ENCODE measurements at regions of chr17 and their contacts with region 1.

Region 1: DNA sequence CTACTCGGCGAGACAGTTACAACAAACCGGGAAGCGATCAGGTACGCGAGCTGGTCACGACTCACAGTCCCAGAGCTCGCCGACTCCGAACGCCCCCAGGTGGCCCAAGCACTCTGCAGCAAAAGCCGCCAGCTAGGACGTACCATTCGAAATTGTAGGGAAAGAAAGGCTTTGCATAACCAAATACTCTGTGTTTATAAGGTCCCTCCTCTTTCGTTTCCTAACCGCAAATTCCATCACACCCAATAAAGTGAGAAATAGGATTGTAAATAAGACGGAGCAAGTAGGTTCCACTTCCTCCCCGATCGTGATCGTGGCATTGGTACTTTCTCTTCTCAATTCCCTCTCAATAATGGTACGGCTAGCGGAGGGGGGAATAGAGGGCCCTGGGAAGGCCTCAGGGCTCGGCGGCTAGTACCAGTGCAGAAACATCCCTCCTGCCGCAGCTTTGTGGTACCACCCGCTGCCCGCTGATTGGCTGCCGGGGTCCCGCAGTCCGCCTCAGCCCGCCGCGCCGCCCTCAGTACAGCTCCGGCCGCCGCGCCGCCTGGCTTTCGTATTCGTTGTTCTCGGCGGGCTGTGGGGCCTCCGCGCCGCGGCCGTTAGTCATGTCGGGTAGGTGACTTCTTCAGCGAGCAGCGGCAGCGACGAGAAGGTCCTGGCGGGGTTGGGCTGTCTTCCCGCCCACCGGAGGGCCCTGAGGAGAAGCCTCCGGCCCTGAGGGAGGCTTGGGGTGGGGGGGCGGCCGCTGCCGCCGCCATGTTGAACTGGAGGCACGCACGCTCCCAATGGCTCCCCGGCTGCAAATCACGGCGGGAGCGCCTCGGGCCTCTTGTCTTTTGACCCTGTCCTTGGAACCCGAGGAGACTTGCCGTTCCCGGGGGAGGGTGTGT is at the start of gene TAF15:
- DNase-seq: peak; percentile 98
- ATAC-seq: peak; percentile 88
- H3K4me3 Mint-ChIP-seq: peak within 1 kb of the TSS; percentile 78
- H3K27ac Mint-ChIP-seq: peak within 1 kb of the TSS; percentile 97
- H3K4me1 Mint-ChIP-seq: peaks cover 57% of the 10 kb centered on the region
- H3K27me3 Mint-ChIP-seq: no peaks in the 10 kb centered on the region
- total RNA-seq, gene TAF15: 316 to 330 TPM

Region 2: GRCh38 chr17:34980681-34981537 is 828.3 kb before region 1 on chr17:
- CTCF ChIA-PET with region 1: no interaction called
- POLR2A ChIA-PET with region 1: interaction called, 3 read pairs
- intact Hi-C with region 1: loop called in 1 of 2 experiments (anchors 1 kb)
- DNase-seq: peak; percentile 82
- ATAC-seq: peak; percentile 82
- H3K4me3 Mint-ChIP-seq: peak overlapping the region; percentile 86
- H3K27ac Mint-ChIP-seq: peak overlapping the region; percentile 93
- H3K4me1 Mint-ChIP-seq: peaks cover 50% of the 10 kb centered on the region
- H3K27me3 Mint-ChIP-seq: no peaks in the 10 kb centered on the region

Region 3: GRCh38 chr17:35312790-35313711 is 496.2 kb before region 1 on chr17:
- CTCF ChIA-PET with region 1: interaction called, 5 read pairs
- POLR2A ChIA-PET with region 1: no interaction called
- intact Hi-C with region 1: loop called in 1 of 2 experiments (anchors 5 kb)
- DNase-seq: peak; percentile 77
- ATAC-seq: peak; percentile 86
- H3K4me3 Mint-ChIP-seq: peak overlapping the region; percentile 73
- H3K27ac Mint-ChIP-seq: peak overlapping the region; percentile 86
- H3K4me1 Mint-ChIP-seq: peaks cover 28% of the 10 kb centered on the region
- H3K27me3 Mint-ChIP-seq: no peaks in the 10 kb centered on the region

Region 4: DNA sequence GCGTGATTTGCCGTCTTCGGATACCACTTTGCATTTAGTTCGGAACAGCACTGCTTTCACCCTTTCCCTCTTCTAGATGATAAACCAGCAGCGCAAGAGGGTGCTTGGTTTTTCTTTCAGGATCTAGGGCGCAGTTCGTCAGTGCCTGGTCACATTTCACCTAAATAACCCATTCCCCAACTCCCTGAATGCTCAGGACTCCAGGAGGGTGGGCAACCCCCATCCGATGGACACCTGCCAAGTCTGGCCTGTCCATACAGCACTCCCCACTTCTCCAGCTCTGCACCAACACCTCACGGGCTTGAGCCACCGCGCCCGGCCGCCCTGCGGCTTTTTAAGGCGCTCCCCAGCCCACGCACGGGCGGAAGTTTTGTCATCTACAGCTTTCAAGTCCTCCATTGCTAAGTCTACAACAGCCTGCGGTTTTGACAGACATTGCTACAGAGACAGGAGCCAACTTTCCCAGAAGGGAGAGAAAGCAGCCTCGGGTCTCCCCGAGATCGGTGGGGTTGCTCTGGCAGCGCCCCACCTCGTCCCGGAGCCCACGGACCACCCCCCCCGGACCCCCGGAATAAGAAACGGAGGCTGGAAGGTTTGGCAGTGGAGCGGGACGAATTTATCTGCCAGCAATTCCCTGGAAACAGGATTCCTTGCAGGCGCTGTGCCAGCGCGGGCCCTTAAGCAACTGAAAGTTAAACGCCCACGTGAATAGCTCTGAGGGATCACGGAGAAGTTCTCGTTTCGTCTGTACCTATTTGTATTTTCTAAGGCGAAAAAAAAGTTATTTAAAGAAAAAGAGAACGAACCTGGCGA is 322.1 kb before region 1 on chr17:
- CTCF ChIA-PET with region 1: no interaction called
- POLR2A ChIA-PET with region 1: no interaction called
- intact Hi-C with region 1: loop called in 1 of 2 experiments (anchors 2 kb)
- DNase-seq: peak; percentile 92
- ATAC-seq: peak; percentile 71
- H3K4me3 Mint-ChIP-seq: peak overlapping the region; percentile 82
- H3K27ac Mint-ChIP-seq: peak overlapping the region; percentile 91
- H3K4me1 Mint-ChIP-seq: peaks cover 36% of the 10 kb centered on the region
- H3K27me3 Mint-ChIP-seq: peaks cover 11% of the 10 kb centered on the region

Region 5: DNA sequence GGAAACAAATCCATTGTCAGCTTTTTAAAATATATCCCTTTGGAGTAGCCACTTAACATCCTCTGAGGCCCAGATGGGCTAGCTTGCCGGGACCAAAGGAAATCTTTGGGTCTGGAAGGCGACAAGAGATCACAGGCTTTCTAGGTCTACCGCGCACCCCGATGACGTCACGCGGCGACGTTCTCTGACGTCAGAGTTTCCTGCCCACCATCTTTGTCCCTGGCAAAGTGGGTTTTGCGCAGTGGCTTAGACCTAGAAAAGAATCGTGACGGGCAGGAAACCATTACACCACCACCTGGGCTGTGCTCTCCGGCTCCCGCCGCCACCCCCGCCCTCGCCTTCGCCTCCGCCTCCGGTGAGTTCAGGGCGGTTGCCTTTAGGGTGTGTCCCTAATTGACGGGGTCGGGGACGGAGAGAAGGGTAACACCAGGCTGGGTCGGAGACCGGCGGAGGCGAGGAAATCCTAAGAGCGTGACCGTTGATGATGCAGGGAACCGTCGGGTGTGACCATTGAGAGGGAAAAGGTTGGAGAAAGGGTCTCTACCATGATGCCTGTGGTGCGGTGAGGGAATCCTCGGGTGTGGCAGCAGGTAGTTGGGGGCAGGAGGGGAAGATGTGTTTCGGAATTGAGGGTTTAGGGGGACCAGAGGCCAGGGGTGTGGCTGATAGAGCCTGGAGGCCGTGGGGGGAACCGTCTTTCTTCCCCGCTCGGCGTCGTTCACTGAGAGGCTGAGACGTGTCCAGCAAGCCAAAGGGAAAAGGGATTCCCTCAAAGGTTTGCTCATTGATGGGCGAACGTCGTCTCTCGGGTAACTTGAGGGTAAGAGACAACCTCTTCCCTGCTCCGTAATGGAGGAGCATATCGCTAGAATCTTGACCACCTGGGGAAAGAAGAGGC is 221.9 kb before region 1 on chr17 and contains the start of gene AP2B1:
- CTCF ChIA-PET with region 1: interaction called, 4 read pairs
- POLR2A ChIA-PET with region 1: interaction called, 3 read pairs
- intact Hi-C with region 1: loop called in 1 of 2 experiments (anchors 1 kb)
- DNase-seq: peak; percentile 96
- ATAC-seq: peak; percentile 94
- H3K4me3 Mint-ChIP-seq: peak within 1 kb of the TSS; percentile 98
- H3K27ac Mint-ChIP-seq: peak within 1 kb of the TSS; percentile 98
- H3K4me1 Mint-ChIP-seq: peaks cover 25% of the 10 kb centered on the region
- H3K27me3 Mint-ChIP-seq: no peaks in the 10 kb centered on the region
- total RNA-seq, gene AP2B1: 166 to 184 TPM

Region 6: DNA sequence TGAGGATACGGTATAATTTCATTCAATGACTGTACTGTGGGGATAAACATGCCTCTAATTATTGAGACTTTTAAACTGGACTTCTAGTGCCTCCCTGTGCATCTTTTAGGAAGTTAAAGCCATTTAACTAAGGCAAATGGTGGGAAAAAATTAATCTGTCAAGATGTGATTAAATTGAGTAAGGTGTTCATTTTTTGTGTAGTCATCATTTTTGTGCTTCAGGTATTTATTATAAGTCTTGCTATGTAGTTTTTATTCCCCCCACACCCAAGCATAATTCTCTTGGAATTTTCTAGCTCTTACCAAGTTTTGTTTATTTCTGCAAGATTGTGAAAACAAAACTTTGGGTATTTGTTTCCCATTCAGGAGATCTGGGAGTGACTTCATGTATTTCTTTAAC is 10.2 kb after region 1 on chr17:
- CTCF ChIA-PET with region 1: interaction called, 12 read pairs
- POLR2A ChIA-PET with region 1: interaction called, 4 read pairs
- intact Hi-C with region 1: no loop called
- DNase-seq: no peak
- ATAC-seq: no peak
- H3K4me3 Mint-ChIP-seq: no peak overlapping the region
- H3K27ac Mint-ChIP-seq: peak overlapping the region; percentile 28
- H3K4me1 Mint-ChIP-seq: peaks cover 36% of the 10 kb centered on the region
- H3K27me3 Mint-ChIP-seq: no peaks in the 10 kb centered on the region

Region 7: GRCh38 chr17:36545465-36546417 is 736.5 kb after region 1 on chr17:
- CTCF ChIA-PET with region 1: no interaction called
- POLR2A ChIA-PET with region 1: no interaction called
- intact Hi-C with region 1: loop called in 1 of 2 experiments (anchors 1 kb)
- DNase-seq: peak; percentile 98
- ATAC-seq: peak; percentile 81
- H3K4me3 Mint-ChIP-seq: peak overlapping the region; percentile 96
- H3K27ac Mint-ChIP-seq: peak overlapping the region; percentile 95
- H3K4me1 Mint-ChIP-seq: peaks cover 37% of the 10 kb centered on the region
- H3K27me3 Mint-ChIP-seq: no peaks in the 10 kb centered on the region